Adrenal gland (tissue), 19 donors: ENCODE measurements at regions of chr1 and their contacts with region 1.

Region 1: DNA sequence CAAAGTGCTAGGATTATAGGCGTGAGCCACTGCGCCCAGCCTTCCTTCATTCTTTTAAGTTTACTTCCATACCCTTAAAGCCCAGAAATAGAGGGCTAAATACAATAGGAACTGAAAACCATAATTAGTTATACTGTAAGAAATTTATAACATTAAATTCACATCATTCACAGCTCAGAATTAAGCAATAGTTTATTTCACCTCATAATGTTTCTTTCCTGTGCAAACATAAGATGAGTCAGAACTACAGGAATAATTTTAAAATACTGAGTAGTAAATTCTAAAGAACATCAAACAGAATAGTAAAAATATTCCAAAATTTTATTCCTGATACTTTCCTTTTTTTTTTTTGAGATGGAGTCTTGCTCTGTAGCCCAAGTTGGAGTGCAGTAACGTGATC is 24.1 kb downstream of the POGZ start:
- DNase-seq: no peak
- H3K4me3 ChIP-seq: no peak overlapping the region
- H3K27ac ChIP-seq: peak overlapping the region in 1 of 5 donors; percentile 21
- H3K4me1 ChIP-seq: peaks cover 7 to 18% of the 10 kb centered on the region in 2 donors
- H3K27me3 ChIP-seq: no peaks in the 10 kb centered on the region
- CTCF ChIP-seq: no peak
- POLR2A ChIP-seq: no peak

Region 2: GRCh38 chr1:150548632-150549495 is 886.3 kb before region 1 on chr1 and contains the start of gene ADAMTSL4:
- intact Hi-C with region 1: no loop called
- DNase-seq: peak; percentile 58 to 85 (median 74)
- H3K4me3 ChIP-seq: peak within 1 kb of the TSS in 2 of 4 donors; percentile 37 to 54
- H3K27ac ChIP-seq: peak within 1 kb of the TSS in 4 of 5 donors; percentile 63 to 92 (median 84)
- H3K4me1 ChIP-seq: peaks cover 26 to 40% of the 10 kb centered on the region in 2 donors
- H3K27me3 ChIP-seq: no peaks in the 10 kb centered on the region
- CTCF ChIP-seq: peak in 3 of 6 experiments; percentile 10 to 22 (median 16)
- POLR2A ChIP-seq: peak in 1 of 2 donors; percentile 53
- total RNA-seq, gene ADAMTSL4: 2.4 to 34.4 (median 6.0) TPM

Region 3: GRCh38 chr1:151419819-151420218 is 15.3 kb before region 1 on chr1:
- intact Hi-C with region 1: loop called in 1 of 2 experiments (anchors 2 kb)
- DNase-seq: no peak
- H3K4me3 ChIP-seq: no peak overlapping the region
- H3K27ac ChIP-seq: no peak overlapping the region
- H3K4me1 ChIP-seq: peaks cover 0 to 2% of the 10 kb centered on the region in 2 donors
- H3K27me3 ChIP-seq: no peaks in the 10 kb centered on the region
- CTCF ChIP-seq: no peak
- POLR2A ChIP-seq: no peak